Activated T-helper 2 cell treated with anti-CD3 and anti-CD28 coated beads, Interferon-gamma antibody, Interleukin-2, Interleukin-4, amounts not matched to agents 10 μg/mL and 5 μg/mL and 100 μg/mL, durations not matched to agents 14 hours and 24 hours and 36 hours (primary cell): ENCODE measurements at regions of chr3 and their contacts with region 1.

Region 1: DNA sequence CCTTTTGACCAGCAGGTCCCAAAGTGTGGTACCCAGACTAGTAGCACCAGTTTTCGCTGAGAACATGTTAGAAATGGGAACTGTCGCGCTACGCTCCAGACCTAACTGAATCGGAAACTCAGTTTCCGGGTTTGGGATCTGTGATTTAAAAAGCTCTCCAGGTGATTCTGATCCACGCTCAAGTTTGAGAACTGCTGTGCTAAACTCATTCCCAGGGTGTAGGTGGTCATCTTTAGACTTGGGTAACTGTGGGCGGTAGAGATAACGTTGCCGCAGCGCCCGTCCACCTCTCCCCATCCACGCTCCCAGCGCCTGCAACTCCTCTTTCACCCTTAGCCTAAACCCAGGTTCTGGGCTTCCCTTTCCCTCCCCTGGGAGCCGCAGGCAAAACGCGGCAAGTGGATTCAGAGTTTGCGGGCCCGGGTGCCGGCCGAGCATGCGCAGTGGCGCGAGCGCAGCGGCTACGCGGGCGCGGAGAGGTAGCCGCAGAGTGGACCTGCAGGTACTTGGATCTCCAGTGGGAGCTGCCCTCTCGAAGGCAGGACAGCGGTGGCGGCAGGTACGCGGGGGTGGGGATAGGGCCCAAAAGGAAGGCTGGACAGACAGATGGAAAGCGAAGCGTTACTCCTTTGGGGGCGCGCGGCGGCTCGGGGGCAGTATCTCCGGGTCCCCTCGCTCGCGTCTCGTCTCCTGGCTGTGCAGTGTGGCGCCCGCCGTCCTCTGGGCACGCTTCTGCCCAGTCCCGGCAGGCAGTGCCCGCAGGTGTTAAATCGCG is at the start of gene PLS1:
- DNase-seq: peak; percentile 87
- H3K4me3 Mint-ChIP-seq: peak within 1 kb of the TSS; percentile 95
- H3K27ac Mint-ChIP-seq: peak within 1 kb of the TSS; percentile 83
- H3K4me1 Mint-ChIP-seq: peaks cover 17% of the 10 kb centered on the region
- H3K27me3 Mint-ChIP-seq: no peaks in the 10 kb centered on the region
- total RNA-seq, gene PLS1: 6.2 and 6.8 TPM in 2 replicates

Region 2: GRCh38 chr3:140941434-140942220 is 1654.5 kb before region 1 on chr3 and contains the start of gene SLC25A36:
- intact Hi-C with region 1: loop called (anchors 5 kb)
- DNase-seq: peak; percentile 94
- H3K4me3 Mint-ChIP-seq: peak within 1 kb of the TSS; percentile 91
- H3K27ac Mint-ChIP-seq: peak within 1 kb of the TSS; percentile 96
- H3K4me1 Mint-ChIP-seq: peaks cover 34% of the 10 kb centered on the region
- H3K27me3 Mint-ChIP-seq: peaks cover 13% of the 10 kb centered on the region
- total RNA-seq, gene SLC25A36: 69.5 and 71.8 TPM in 2 replicates

Region 3: GRCh38 chr3:142723968-142724681 is 128.0 kb after region 1 on chr3 and contains the start of gene TRPC1:
- intact Hi-C with region 1: loop called (anchors 1 kb)
- DNase-seq: peak; percentile 76
- H3K4me3 Mint-ChIP-seq: peak within 1 kb of the TSS; percentile 86
- H3K27ac Mint-ChIP-seq: peak within 1 kb of the TSS; percentile 80
- H3K4me1 Mint-ChIP-seq: peaks cover 4% of the 10 kb centered on the region
- H3K27me3 Mint-ChIP-seq: peaks cover 56% of the 10 kb centered on the region
- total RNA-seq, gene TRPC1: 1.4 and 2.5 TPM in 2 replicates

Region 4: GRCh38 chr3:142828703-142829305 is 232.7 kb after region 1 on chr3:
- intact Hi-C with region 1: loop called (anchors 10 kb)
- DNase-seq: peak; percentile 50
- H3K4me3 Mint-ChIP-seq: no peak overlapping the region
- H3K27ac Mint-ChIP-seq: no peak overlapping the region
- H3K4me1 Mint-ChIP-seq: no peaks in the 10 kb centered on the region
- H3K27me3 Mint-ChIP-seq: peaks cover 25% of the 10 kb centered on the region

Region 5: DNA sequence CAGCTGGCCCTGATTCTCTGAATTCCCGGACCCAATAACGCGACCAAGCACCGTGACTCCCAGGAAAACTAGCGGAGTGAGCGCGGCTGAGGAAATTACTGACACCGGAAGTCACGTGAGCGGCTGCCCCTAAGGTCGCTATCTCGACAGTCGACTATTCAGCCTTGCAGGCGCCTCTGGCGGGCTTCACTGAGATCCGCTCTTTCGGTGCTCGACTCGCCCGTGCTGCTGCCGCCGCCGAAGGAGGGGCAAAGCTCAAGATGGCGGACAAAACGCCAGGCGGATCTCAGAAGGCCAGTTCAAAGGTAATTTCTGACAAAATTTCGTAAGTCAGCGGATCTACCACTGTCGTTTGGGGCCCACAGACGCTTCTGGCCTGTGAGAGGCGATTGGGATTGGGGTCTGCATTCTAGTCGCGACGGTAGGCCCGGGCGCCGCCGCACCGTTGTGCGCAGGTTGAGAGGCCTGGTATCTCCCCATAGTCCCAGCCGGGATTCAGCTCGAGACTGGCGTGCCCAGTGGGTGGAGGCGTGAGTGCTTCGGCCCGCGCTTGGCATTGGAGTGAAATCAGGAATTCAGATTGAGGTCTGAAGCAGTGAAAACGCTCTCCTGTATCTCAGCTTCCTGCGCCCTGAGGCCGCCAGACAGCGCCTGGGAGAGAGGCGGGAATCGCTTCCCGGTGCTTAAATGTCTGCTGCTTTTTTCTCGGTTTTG is 405.4 kb after region 1 on chr3 and contains the start of gene U2SURP:
- intact Hi-C with region 1: loop called (anchors 5 kb)
- DNase-seq: peak; percentile 91
- H3K4me3 Mint-ChIP-seq: peak within 1 kb of the TSS; percentile 94
- H3K27ac Mint-ChIP-seq: peak within 1 kb of the TSS; percentile 96
- H3K4me1 Mint-ChIP-seq: peaks cover 22% of the 10 kb centered on the region
- H3K27me3 Mint-ChIP-seq: peaks cover 3% of the 10 kb centered on the region
- total RNA-seq, gene U2SURP: 176 TPM in 2 replicates

Region 6: DNA sequence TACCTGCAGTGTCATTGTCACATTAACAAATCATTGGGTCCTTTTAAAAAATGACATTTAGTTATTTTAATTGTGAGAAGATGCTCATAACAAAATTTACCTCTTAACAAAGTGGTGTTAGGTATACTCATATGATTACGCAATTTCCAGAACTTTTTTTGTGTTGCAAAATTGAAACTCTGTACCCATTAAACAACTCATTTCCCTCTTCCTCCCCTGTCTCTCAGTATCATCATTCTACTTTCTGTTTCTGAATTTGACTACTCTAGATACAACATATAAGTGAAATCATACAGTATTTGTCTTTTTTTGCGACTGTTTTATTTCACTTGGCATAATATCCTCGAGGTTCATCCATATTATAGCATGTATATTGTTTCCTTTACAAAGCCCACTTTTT is 464.8 kb after region 1 on chr3:
- intact Hi-C with region 1: no loop called
- DNase-seq: no peak
- H3K4me3 Mint-ChIP-seq: no peak overlapping the region
- H3K27ac Mint-ChIP-seq: no peak overlapping the region
- H3K4me1 Mint-ChIP-seq: peaks cover 19% of the 10 kb centered on the region
- H3K27me3 Mint-ChIP-seq: no peaks in the 10 kb centered on the region